ENCODE measurements at regions of chr11 and their contacts with region 1.

Region 1: DNA sequence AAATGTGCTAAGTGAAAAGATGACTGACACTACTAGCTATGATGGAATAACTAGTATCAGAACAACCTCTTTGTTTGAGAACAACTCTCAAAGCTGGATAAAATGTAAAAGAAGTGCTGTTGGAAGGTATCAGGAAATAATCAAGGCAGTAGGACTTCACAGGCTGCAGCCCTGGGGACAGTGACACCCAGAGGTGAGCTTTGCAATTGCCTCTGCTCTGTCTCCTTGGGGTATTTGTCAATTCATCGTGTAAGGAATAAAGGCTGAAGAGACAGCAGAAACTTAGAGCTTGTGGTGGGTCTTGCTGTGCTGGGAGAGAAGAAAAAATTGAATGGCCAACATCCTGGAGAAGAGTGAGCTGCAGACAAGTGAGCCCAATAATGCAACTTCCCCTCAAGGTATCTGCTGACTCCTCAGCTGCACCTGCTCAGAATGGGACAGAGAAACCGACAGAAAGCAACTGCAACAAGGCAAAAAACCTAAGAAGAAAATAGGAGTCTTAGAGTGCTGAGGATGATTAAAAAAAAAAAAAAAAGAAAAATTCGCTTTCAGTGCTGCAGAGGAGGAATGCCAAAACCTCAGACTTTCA is 141.1 kb downstream of the RCN1 start:
- DNase-seq: peak; percentile 32
- CTCF ChIP-seq: peak; percentile 65

Region 2: DNA sequence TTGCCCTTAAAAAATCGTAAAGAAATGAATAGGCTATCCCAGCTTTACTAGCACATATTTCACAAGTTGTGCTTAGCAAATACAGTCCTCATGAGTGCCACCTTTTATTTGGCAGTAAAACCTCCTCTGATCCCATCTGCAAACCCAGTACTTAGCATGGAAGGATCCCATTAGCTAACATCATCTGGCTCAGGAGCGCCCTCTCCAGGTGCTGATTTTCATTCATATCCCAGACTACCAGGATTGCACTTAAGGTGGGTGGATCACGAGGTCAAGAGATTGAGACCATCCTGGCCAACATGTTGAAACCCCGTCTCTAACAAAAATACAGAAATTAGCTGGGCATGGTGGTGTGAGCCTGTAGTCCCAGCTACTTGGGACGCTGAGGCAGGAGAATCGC is 344.8 kb before region 1 on chr11:
- CTCF ChIA-PET with region 1: no interaction called
- POLR2A ChIA-PET with region 1: no interaction called
- DNase-seq: no peak
- CTCF ChIP-seq: peak; percentile 10

Region 3: GRCh38 chr11:32071811-32072210 is 160.2 kb before region 1 on chr11:
- CTCF ChIA-PET with region 1: no interaction called
- POLR2A ChIA-PET with region 1: no interaction called
- DNase-seq: no peak
- CTCF ChIP-seq: no peak

Region 4: DNA sequence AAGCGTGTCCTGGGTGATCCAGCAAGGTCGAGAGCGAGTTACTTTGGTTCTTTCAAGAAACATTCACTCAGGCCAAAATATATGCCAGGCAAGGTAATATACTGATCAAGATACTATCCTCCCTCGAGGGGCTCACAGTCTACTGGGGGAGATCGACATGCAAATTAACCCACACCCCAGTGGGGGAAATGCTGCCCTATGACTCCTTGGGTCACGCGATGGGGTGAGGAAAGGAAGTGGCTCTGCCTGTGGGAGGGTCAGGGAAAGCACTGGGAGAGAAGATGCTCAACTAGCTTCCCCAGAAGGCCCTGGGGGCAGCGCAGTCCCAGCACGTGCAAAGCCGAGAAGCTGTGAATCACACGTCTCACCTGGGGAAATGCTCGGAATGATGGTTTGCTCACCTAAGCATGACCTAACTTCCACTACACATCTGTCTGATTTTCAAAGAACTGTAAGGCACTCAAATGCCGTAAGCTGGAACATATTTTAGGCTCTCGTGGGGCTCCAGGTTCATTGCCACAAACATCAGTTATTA is 10.5 kb before region 1 on chr11:
- CTCF ChIA-PET with region 1: interaction called, 10 read pairs
- POLR2A ChIA-PET with region 1: no interaction called
- DNase-seq: no peak
- CTCF ChIP-seq: no peak

Region 5: GRCh38 chr11:32244453-32244852 is 12.5 kb after region 1 on chr11:
- CTCF ChIA-PET with region 1: interaction called, 17 read pairs
- POLR2A ChIA-PET with region 1: no interaction called
- DNase-seq: no peak
- CTCF ChIP-seq: no peak

Region 6: GRCh38 chr11:32255841-32256240 is 23.8 kb after region 1 on chr11:
- CTCF ChIA-PET with region 1: interaction called, 11 read pairs
- POLR2A ChIA-PET with region 1: no interaction called
- DNase-seq: no peak
- CTCF ChIP-seq: no peak

Region 7: DNA sequence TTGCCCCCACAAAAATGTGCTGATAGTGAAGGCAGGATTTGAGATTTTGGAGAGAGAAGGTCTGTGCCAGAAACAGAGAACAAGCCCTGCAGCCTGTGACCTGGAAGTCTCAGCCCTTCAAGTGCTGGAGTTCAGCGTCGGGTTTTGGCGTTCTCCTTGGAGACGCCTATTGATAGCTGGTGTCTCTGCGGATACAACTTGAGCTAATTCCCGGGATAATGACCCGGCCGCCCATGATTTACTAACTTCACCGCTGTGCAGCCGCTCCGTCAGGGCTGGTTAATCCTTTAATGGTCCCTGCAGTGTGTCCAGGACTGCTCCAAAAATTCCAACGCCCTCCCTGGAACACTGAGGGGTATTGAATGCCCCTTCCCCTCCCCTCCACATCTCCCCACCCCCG is 126.7 kb after region 1 on chr11:
- CTCF ChIA-PET with region 1: no interaction called
- POLR2A ChIA-PET with region 1: no interaction called
- DNase-seq: no peak
- CTCF ChIP-seq: no peak

Measured in GM10248 (cell line).